GM12878 (cell line): ENCODE measurements at regions of chr18 and their contacts with region 1.

Region 1: DNA sequence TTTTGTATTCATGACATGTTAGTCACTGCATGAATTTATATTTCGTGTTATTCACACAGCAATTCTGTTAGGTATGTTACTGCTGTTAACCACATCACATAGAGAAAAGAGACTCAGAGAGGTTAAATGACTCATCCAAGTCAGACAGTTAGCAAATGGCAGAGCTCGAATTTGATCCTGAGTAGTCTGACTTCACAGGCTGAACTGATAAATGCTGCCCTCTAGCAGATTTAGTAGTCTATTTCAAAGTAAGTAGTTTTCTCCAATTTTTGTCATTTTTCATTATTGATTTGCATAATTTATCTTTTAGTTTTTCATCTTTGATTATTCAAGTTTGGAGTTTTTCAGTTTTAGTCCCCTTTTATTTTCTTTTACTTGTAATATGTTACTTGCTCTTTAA is 58.3 kb downstream of the WDR7 start:
- DNase-seq: peak; percentile 46
- ATAC-seq: peak; percentile 100
- H3K4me3 ChIP-seq: no peak overlapping the region
- H3K27ac ChIP-seq: no peak overlapping the region
- H3K4me1 ChIP-seq: no peaks in the 10 kb centered on the region
- H3K27me3 ChIP-seq: no peaks in the 10 kb centered on the region
- CTCF ChIP-seq: peak in 2 of 3 experiments; percentile 44 to 53; a peak in 4 of 6 replicates
- EP300 ChIP-seq: peak; percentile 33 to 55; a peak in 2 of 4 replicates
- POLR2A ChIP-seq: no peak
- RAD21 ChIP-seq: peak; percentile 42; the same call in 1 of the 2 replicates

Region 2: DNA sequence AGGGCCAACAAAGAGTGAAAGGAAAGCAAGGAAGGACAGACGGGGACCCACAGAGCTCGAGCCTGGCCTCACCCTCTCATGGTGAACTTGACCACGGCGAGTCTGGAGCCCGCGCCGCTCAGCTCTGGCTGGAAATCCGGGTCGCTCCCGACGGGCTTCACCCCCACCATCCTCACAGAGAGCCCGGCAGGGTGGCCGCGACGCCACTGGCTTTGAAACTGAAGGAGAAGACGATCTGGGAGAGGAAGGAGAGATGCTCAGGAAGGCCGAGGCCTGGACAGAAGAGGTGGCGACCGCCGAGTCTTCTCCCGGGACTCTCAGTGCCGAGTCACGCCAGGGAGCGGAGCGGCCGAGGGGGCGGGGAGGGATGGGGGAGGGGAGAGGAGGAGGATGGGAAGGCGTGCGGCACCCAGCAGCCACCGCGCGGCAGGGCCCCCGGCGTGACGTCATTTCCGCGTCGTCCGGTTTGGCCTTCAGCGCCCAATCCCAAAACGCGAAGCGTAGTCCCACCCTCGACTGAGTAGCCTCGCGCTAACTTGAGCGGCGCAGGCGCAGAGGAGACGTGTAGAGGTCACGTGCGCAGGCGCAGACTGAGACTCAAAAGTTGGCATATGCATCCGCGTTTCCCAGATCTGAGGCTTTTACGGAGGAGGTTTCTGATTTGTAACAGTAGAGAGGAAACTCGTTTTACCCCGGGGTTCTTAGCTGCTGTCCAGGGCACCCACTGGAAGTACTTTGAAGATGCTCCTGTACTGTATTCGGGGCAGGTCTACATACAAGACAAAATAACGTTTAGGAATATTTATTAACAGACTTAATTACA is 71.0 kb before region 1 on chr18 and contains the start of gene TXNL1:
- CTCF ChIA-PET with region 1: interaction called, 69 read pairs
- POLR2A ChIA-PET with region 1: no interaction called
- RAD21 ChIA-PET with region 1: interaction called, 3 read pairs
- SMC1A ChIA-PET with region 1: interaction called, 4 read pairs
- in situ Hi-C with region 1: no loop called
- intact Hi-C with region 1: loop called (anchors 2 kb)
- DNase-seq: peak; percentile 96
- ATAC-seq: peak; percentile 94
- H3K4me3 ChIP-seq: peak within 1 kb of the TSS; percentile 87
- H3K27ac ChIP-seq: peak within 1 kb of the TSS; percentile 90
- H3K4me1 ChIP-seq: peaks cover 5% of the 10 kb centered on the region
- H3K27me3 ChIP-seq: no peaks in the 10 kb centered on the region
- CTCF ChIP-seq: no peak
- EP300 ChIP-seq: 0 out of 4 replicates have a peak, but pooled peaks of 1 of the 2 experiments have one; percentile 44
- POLR2A ChIP-seq: peak; percentile 87
- RAD21 ChIP-seq: no peak
- polyA plus RNA-seq, gene TXNL1: 32.8 to 54.9 TPM

Region 3: GRCh38 chr18:56645415-56646016 is 63.9 kb before region 1 on chr18:
- CTCF ChIA-PET with region 1: interaction called, 69 read pairs
- POLR2A ChIA-PET with region 1: no interaction called
- RAD21 ChIA-PET with region 1: interaction called, 17 read pairs
- SMC1A ChIA-PET with region 1: interaction called, 9 read pairs
- in situ Hi-C with region 1: no loop called
- intact Hi-C with region 1: no loop called
- DNase-seq: no peak
- ATAC-seq: peak; percentile 49
- H3K4me3 ChIP-seq: no peak overlapping the region
- H3K27ac ChIP-seq: no peak overlapping the region
- H3K4me1 ChIP-seq: no peaks in the 10 kb centered on the region; the same call in none of the 2 replicates
- H3K27me3 ChIP-seq: no peaks in the 10 kb centered on the region
- CTCF ChIP-seq: peak; percentile 40 to 62 (median 60); a peak in 5 of 6 replicates
- EP300 ChIP-seq: no peak
- POLR2A ChIP-seq: no peak
- RAD21 ChIP-seq: peak; percentile 37; the same call in 1 of the 2 replicates

Region 4: DNA sequence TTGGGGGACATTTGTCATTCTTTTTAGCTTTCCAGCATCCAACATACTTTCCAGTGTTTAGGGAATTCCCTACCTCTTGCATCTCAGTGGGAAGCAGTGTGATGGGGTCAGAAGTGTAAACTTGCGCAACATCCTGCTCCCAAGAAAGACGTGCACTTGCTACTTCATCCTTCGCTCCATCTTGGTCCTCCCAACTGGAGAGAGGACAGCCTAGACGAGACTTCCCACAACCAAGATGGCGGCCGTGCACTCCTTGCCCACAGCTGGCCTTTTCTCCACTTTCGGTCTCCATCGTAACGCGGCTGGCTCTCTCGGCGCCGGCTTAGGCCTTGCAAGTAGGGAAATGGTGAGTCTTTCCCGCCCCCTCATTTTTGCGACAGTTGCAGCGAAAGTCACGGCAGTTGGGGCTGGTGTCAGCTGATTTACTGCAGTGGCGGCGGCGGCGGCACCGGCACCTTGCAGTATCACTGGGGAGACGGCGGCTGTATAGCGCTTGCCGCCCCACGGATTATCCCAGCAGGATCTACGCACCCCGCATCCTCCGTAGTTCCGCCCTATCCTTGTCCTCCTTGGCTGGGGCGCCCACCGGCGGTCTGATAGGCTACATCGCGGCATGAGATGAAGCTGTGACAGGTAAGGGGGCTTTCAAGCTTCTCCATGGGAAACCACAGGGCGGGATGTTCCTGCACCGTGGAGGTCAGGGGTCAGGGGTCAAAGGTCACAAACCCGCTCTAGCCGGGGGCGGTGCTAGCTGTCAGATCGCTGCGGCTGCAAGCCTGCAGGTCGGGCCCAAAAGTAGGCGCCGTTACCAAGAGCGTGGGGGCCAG is 58.3 kb before region 1 on chr18 and contains the start of gene WDR7:
- CTCF ChIA-PET with region 1: interaction called, 69 read pairs
- POLR2A ChIA-PET with region 1: interaction called, 3 read pairs
- RAD21 ChIA-PET with region 1: interaction called, 17 read pairs
- SMC1A ChIA-PET with region 1: interaction called, 9 read pairs
- in situ Hi-C with region 1: no loop called
- intact Hi-C with region 1: no loop called
- DNase-seq: peak; percentile 91
- ATAC-seq: peak; percentile 96
- H3K4me3 ChIP-seq: peak within 1 kb of the TSS; percentile 67
- H3K27ac ChIP-seq: peak within 1 kb of the TSS; percentile 77
- H3K4me1 ChIP-seq: no peaks in the 10 kb centered on the region; the same call in none of the 2 replicates
- H3K27me3 ChIP-seq: no peaks in the 10 kb centered on the region
- CTCF ChIP-seq: no peak
- EP300 ChIP-seq: no peak
- POLR2A ChIP-seq: peak; percentile 86
- RAD21 ChIP-seq: no peak
- polyA plus RNA-seq, gene WDR7: 2.8 to 3.1 TPM

Region 5: GRCh38 chr18:56684277-56684676 is 25.2 kb before region 1 on chr18:
- CTCF ChIA-PET with region 1: interaction called, 15 read pairs
- POLR2A ChIA-PET with region 1: no interaction called
- RAD21 ChIA-PET with region 1: no interaction called
- SMC1A ChIA-PET with region 1: interaction called, 3 read pairs
- in situ Hi-C with region 1: no loop called
- intact Hi-C with region 1: no loop called
- DNase-seq: no peak
- ATAC-seq: no peak
- H3K4me3 ChIP-seq: no peak overlapping the region
- H3K27ac ChIP-seq: no peak overlapping the region
- H3K4me1 ChIP-seq: no peaks in the 10 kb centered on the region
- H3K27me3 ChIP-seq: no peaks in the 10 kb centered on the region
- CTCF ChIP-seq: no peak
- EP300 ChIP-seq: no peak
- POLR2A ChIP-seq: no peak
- RAD21 ChIP-seq: no peak